ENCODE measurements at regions of chr5 and their contacts with region 1.

Region 1: DNA sequence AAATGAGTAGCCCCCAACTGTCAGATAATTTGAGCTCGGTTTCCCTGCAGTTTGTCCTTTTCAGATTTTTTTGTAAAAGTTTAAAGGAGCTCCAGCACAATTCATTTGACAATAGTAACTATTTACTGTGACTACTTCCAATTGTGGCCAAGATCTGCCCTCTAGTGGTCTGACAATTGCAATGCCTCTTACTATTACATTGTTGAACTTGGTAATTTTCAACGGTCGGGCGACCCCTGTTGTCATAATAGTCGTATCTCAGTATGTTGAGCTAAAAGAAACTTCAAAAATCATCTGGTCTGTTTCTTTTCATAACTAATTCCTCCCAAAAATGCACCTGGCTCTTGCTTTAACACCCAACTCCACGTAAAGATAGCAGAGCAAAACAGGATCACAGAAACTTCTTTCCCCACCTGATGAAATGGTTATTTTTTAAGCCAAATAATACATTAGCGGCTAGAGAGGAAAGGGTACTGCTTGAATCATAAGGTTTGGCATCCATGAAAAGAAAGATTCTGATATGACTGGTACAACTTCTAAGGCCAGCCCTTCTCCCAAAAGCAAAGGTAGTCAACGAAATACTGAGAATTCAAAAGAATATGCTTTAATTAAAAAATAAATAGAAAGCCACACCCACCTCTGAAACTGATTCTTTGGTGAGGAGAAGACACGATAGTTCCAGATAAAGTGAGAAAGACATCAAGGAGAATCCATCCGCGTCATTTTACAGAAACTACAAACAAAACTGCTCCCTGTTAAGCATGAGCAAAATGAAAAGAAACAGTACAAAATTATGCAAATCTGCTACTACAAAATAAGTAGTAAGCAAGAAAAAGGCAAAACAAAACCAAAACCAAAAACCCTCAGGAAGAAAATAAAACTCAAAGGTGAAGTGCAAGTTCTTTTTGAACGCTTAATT is 76.9 kb upstream of the HTR4 start:
- DNase-seq: peak; percentile 52
- H3K4me3 ChIP-seq: no peak overlapping the region; a peak in 1 of 4 replicates
- H3K27ac ChIP-seq: peak overlapping the region in 1 of 2 experiments; percentile 56; a peak in 2 of 4 replicates
- H3K4me1 ChIP-seq: peaks cover 0 to 15% of the 10 kb centered on the region in 2 experiments; a peak in 3 of 4 replicates
- H3K27me3 ChIP-seq: no peaks in the 10 kb centered on the region
- CTCF ChIP-seq: peak; percentile 99
- EP300 ChIP-seq: no peak
- RAD21 ChIP-seq: peak; percentile 99

Region 2: DNA sequence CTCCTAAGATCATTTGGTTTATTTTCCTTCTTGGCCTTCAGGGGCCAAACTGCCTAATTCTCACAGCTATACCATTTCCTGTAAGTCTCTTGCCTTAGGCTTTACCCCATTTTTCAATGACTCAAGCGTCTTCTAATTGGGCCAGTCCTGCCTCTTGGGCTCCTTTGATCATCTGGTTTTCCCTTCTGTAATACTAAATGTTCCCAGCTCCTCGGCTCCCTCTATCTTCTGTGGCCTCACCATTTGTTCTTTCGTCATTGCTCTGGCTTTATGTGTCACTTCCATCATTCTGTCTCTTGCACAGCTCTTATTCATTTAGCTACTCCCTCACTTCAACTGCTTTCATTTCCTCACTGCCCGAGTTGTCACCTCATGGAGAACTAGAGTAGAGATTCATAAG is 433.5 kb before region 1 on chr5:
- CTCF ChIA-PET with region 1: interaction called, 31 read pairs
- POLR2A ChIA-PET with region 1: no interaction called
- DNase-seq: no peak
- H3K4me3 ChIP-seq: no peak overlapping the region
- H3K27ac ChIP-seq: no peak overlapping the region
- H3K4me1 ChIP-seq: no peaks in the 10 kb centered on the region
- H3K27me3 ChIP-seq: no peaks in the 10 kb centered on the region
- CTCF ChIP-seq: no peak
- EP300 ChIP-seq: no peak
- RAD21 ChIP-seq: no peak

Region 3: DNA sequence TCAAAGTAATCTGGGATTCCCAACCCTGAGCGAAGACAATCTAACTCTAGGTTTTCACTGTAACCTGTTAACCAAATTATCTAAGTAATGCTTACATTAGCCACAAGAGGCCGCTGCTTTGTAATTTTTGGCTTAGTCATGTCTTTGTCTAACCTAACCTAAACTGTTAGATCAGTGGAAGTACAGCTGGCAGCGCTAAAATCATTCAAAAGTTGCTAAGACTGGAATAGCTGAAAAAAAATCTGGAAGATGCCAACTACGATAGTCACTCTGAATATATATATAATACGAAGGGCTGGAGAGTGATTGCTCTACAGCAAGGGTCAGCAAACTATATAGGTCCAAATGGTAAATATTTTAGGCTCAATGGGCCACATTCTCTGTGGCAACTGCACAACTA is 287.2 kb before region 1 on chr5:
- CTCF ChIA-PET with region 1: interaction called, 704 read pairs
- POLR2A ChIA-PET with region 1: interaction called, 3 read pairs
- DNase-seq: peak; percentile 52
- H3K4me3 ChIP-seq: no peak overlapping the region
- H3K27ac ChIP-seq: no peak overlapping the region
- H3K4me1 ChIP-seq: no peaks in the 10 kb centered on the region
- H3K27me3 ChIP-seq: no peaks in the 10 kb centered on the region
- CTCF ChIP-seq: peak; percentile 85
- EP300 ChIP-seq: no peak
- RAD21 ChIP-seq: peak; percentile 90

Region 4: GRCh38 chr5:148556835-148557234 is 174.4 kb before region 1 on chr5:
- CTCF ChIA-PET with region 1: interaction called, 14 read pairs
- POLR2A ChIA-PET with region 1: no interaction called
- DNase-seq: no peak
- H3K4me3 ChIP-seq: no peak overlapping the region
- H3K27ac ChIP-seq: no peak overlapping the region
- H3K4me1 ChIP-seq: no peaks in the 10 kb centered on the region
- H3K27me3 ChIP-seq: no peaks in the 10 kb centered on the region
- CTCF ChIP-seq: no peak
- EP300 ChIP-seq: no peak
- RAD21 ChIP-seq: no peak

Region 5: DNA sequence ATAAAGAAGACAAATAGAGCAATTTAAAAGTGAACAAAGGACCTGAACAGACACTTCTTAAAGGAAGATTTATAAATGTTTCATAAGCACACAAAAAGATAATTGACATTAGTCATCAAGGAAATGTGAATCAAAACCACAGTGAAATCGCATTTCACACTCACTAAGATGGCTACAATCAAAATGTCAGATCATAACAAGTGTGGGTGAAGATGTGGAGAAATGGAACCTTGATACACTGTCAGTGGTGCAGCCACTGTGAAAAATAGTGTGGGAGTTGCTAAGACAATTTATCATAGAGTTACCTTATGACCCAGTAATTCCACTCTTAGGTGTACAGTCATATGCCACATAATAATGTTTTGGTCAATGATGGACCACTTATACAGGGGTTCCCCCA is 22.3 kb before region 1 on chr5:
- CTCF ChIA-PET with region 1: interaction called, 28 read pairs
- POLR2A ChIA-PET with region 1: no interaction called
- DNase-seq: no peak
- H3K4me3 ChIP-seq: no peak overlapping the region
- H3K27ac ChIP-seq: no peak overlapping the region
- H3K4me1 ChIP-seq: no peaks in the 10 kb centered on the region
- H3K27me3 ChIP-seq: no peaks in the 10 kb centered on the region
- CTCF ChIP-seq: no peak
- EP300 ChIP-seq: no peak
- RAD21 ChIP-seq: no peak

Region 6: GRCh38 chr5:148998174-148998797 is 267.1 kb after region 1 on chr5:
- CTCF ChIA-PET with region 1: interaction called, 16 read pairs
- POLR2A ChIA-PET with region 1: no interaction called
- DNase-seq: peak; percentile 38
- H3K4me3 ChIP-seq: no peak overlapping the region
- H3K27ac ChIP-seq: no peak overlapping the region
- H3K4me1 ChIP-seq: peaks cover 0 to 10% of the 10 kb centered on the region in 2 experiments; a peak in 3 of 4 replicates
- H3K27me3 ChIP-seq: no peaks in the 10 kb centered on the region
- CTCF ChIP-seq: peak; percentile 81
- EP300 ChIP-seq: no peak
- RAD21 ChIP-seq: peak; percentile 78

Region 7: GRCh38 chr5:149141224-149141956 is 410.2 kb after region 1 on chr5 and contains the start of gene ABLIM3:
- CTCF ChIA-PET with region 1: interaction called, 10 read pairs
- POLR2A ChIA-PET with region 1: no interaction called
- DNase-seq: peak; percentile 94
- H3K4me3 ChIP-seq: peak within 1 kb of the TSS; percentile 69 to 87
- H3K27ac ChIP-seq: peak within 1 kb of the TSS in 1 of 2 experiments; percentile 40; a peak in 2 of 4 replicates
- H3K4me1 ChIP-seq: peaks cover 2 to 13% of the 10 kb centered on the region in 2 experiments; a peak in 3 of 4 replicates
- H3K27me3 ChIP-seq: no peaks in the 10 kb centered on the region
- CTCF ChIP-seq: peak; percentile 85
- EP300 ChIP-seq: no peak
- RAD21 ChIP-seq: peak; percentile 55
- polyA plus RNA-seq, gene ABLIM3: 5.2 and 5.9 TPM in 2 replicates

Measured in SK-N-SH (cell line).